RWPE1 (cell line): ENCODE measurements at regions of chr10 and their contacts with region 1.

Region 1: GRCh38 chr10:93482145-93482834 is at the start of gene MYOF:
- DNase-seq: peak; percentile 89
- H3K27ac ChIP-seq: peak within 1 kb of the TSS; percentile 94
- CTCF ChIP-seq: peak; percentile 39

Region 2: GRCh38 chr10:93309062-93309461 is 173.2 kb before region 1 on chr10:
- CTCF ChIA-PET with region 1: no interaction called
- POLR2A ChIA-PET with region 1: no interaction called
- DNase-seq: no peak
- H3K27ac ChIP-seq: no peak overlapping the region
- CTCF ChIP-seq: no peak

Region 3: DNA sequence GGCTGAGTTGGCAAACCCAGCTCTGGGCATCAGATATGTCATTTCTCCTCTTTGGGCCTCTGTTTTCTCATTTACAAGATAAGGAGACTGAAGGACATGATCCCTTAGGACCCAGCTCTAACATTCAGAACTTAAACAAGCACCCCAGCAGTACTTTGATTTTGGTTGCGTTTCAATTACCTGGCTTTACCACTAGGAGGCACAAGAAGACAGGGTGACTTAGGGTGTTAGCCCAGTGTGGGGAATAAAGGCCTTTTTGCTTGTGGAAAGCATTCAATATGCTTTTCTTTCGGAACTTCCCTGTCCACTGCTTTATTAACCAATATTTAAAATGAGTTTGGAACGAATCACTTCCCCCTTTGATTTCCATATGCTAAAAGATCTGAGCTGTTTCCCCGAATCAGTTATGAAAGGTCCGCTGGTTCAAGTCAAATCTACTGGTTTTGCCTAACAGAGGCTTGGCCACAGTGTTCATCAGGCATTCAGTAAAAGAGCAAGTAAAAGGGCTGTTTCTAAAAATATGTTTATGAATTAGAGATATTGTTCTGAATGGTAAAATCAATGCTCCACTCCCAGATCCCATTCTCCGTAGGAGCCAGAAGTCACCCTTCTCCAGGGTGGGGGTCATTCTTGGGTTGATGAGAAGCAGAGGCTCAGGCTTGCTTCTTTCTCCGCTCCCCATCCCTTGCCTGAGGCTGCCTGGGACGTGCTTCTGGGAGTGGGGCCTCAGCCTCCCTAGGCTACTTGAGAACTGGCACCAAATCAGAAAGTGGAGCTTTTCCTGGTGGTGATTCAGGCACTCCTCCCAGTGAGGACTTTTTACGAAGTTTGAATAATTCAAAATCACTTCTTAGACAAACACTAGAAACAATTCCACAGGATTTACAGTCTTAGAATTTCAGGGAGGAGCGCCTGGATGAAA is 105.7 kb before region 1 on chr10:
- CTCF ChIA-PET with region 1: interaction called, 95 read pairs
- POLR2A ChIA-PET with region 1: interaction called, 3 read pairs
- DNase-seq: peak; percentile 82
- H3K27ac ChIP-seq: peak overlapping the region; percentile 93
- CTCF ChIP-seq: peak; percentile 90

Region 4: GRCh38 chr10:93383562-93383981 is 98.7 kb before region 1 on chr10:
- CTCF ChIA-PET with region 1: interaction called, 95 read pairs
- POLR2A ChIA-PET with region 1: interaction called, 4 read pairs
- DNase-seq: peak; percentile 67
- H3K27ac ChIP-seq: peak overlapping the region; percentile 95
- CTCF ChIP-seq: no peak

Region 5: GRCh38 chr10:93438586-93439253 is 43.6 kb before region 1 on chr10:
- CTCF ChIA-PET with region 1: interaction called, 11 read pairs
- POLR2A ChIA-PET with region 1: interaction called, 5 read pairs
- DNase-seq: peak; percentile 82
- H3K27ac ChIP-seq: peak overlapping the region; percentile 99
- CTCF ChIP-seq: no peak

Region 6: DNA sequence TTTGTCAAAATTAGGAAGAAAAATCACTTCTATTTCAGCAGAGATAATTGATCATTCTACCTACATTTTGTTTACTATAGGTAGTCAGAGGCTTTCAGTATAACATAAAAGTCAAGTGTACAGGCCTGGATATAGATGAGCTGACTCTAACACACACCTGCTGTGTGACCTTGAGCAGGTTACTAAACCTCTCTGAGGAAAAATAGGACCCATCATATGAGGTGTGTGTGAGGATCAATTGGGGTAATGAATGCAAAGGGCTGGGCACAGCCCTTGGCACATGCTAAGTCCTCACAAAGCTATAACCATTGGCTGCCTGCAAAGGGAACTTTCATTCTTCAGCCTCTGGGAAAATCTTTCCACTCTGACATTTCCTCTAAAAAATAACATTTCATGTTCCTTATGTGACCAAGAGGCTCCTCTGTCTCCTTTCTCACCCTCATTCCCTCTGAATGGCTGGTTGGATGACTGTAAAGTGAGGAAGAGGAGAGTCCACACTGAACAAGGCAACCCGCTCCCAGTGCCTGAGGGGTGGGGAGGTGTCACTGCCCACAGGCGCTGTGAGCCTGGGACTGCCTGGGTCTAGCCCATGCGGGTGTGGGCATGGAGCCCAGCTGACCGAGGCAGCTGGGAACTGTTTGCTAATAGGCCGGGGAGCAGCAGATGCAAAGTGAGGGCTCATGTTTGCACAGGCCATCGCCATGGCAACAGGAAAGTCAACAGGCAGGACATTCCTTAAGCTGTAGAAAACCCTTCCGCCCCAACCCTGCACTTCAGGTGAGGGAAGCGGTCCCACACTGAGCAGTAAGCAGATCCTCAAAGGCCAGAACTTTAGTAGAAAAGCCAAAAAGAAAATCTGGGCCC is 37.0 kb before region 1 on chr10:
- CTCF ChIA-PET with region 1: interaction called, 13 read pairs
- POLR2A ChIA-PET with region 1: interaction called, 5 read pairs
- DNase-seq: peak; percentile 97
- H3K27ac ChIP-seq: peak overlapping the region; percentile 93
- CTCF ChIP-seq: no peak

Region 7: GRCh38 chr10:93509816-93510215 is 27.5 kb after region 1 on chr10:
- CTCF ChIA-PET with region 1: interaction called, 14 read pairs
- POLR2A ChIA-PET with region 1: no interaction called
- DNase-seq: no peak
- H3K27ac ChIP-seq: no peak overlapping the region
- CTCF ChIP-seq: no peak